Mammary epithelial cell (primary cell): ENCODE measurements at regions of chr1 and their contacts with region 1.

Region 1: GRCh38 chr1:110106013-110106941 is 6.0 kb upstream of the UBL4B start:
- DNase-seq: peak; percentile 36
- H3K4me3 ChIP-seq: no peak overlapping the region
- H3K27ac ChIP-seq: no peak overlapping the region
- H3K4me1 ChIP-seq: no peaks in the 10 kb centered on the region
- H3K27me3 ChIP-seq: no peaks in the 10 kb centered on the region
- CTCF ChIP-seq: peak; percentile 90 to 97

Region 2: GRCh38 chr1:110034451-110035235 is 71.6 kb before region 1 on chr1 and contains the start of gene STRIP1:
- CTCF ChIA-PET with region 1: no interaction called
- dilution Hi-C with region 1: no loop called
- in situ Hi-C with region 1: no loop called
- intact Hi-C with region 1: loop called (anchors 1 kb)
- DNase-seq: peak; percentile 93
- H3K4me3 ChIP-seq: peak within 1 kb of the TSS; percentile 43 to 83 (median 83)
- H3K27ac ChIP-seq: peak within 1 kb of the TSS; percentile 77
- H3K4me1 ChIP-seq: peaks cover 20% of the 10 kb centered on the region
- H3K27me3 ChIP-seq: no peaks in the 10 kb centered on the region
- CTCF ChIP-seq: no peak
- total RNA-seq, gene STRIP1: 39.4 to 51.3 TPM

Region 3: GRCh38 chr1:110053557-110054428 is 52.5 kb before region 1 on chr1:
- CTCF ChIA-PET with region 1: no interaction called
- dilution Hi-C with region 1: no loop called
- in situ Hi-C with region 1: loop called in 1 of 2 experiments (anchors 10 kb)
- intact Hi-C with region 1: loop called (anchors 1 kb)
- DNase-seq: no peak
- H3K4me3 ChIP-seq: no peak overlapping the region
- H3K27ac ChIP-seq: no peak overlapping the region
- H3K4me1 ChIP-seq: peaks cover 24% of the 10 kb centered on the region
- H3K27me3 ChIP-seq: no peaks in the 10 kb centered on the region
- CTCF ChIP-seq: peak; percentile 93 to 99

Region 4: DNA sequence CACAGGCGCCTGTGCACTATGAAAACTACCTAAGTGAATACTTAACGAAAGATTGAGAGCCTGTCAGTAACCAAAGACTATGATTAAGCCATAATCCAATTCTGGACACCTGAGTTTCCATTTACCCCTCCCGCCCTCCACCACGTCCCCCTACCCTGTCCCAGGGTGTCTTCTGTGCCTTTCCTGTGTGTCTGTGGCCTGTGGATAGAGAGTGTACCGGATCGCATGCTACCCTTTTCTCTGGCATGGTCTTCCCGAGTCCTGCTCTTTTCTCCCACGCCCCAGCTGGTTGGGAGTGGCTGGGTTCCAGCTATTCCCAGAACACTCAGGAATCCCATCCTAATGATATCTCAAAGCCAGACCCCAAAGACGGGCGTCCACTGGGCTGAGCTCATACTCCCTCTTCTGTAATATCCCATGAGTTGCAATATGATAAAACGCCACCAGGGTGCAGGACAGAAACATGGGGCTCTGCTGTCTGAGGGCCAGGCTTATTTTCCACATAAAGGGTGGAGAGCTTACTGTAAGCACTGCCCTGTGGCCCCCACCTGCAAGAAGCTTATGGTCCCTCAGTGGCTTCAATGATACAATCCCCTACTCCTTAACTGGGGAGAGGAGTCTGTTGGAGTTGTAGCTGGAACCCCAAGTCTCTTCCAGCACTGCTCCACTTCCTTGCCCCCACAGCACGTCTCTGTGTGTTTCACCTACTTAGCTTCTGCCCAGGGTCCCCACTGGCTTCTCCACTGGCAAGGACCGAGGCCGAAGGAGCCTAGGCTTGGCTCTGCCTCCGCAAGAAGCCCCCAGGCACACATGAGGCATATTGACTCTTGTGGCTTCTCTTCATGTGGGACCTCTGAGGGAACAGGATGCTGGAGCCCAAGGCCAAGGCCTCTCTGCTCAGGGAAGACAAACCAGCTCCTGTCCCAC is 18.2 kb before region 1 on chr1:
- CTCF ChIA-PET with region 1: interaction called, 3 read pairs
- dilution Hi-C with region 1: no loop called
- in situ Hi-C with region 1: no loop called
- intact Hi-C with region 1: loop called (anchors 1 kb)
- DNase-seq: peak; percentile 31
- H3K4me3 ChIP-seq: no peak overlapping the region
- H3K27ac ChIP-seq: no peak overlapping the region
- H3K4me1 ChIP-seq: no peaks in the 10 kb centered on the region
- H3K27me3 ChIP-seq: peaks cover 22% of the 10 kb centered on the region
- CTCF ChIP-seq: peak; percentile 69